Tibial artery (tissue), 4 donors: ENCODE measurements at regions of chr3 and their contacts with region 1.

Region 1: GRCh38 chr3:33787328-33788009 is 11.0 kb upstream of the PDCD6IP start:
- DNase-seq: peak; percentile 62 to 71
- H3K4me3 ChIP-seq: peak overlapping the region; percentile 38 to 44
- H3K27ac ChIP-seq: no peak overlapping the region
- H3K4me1 ChIP-seq: peaks cover 0 to 11% (median 3%) of the 10 kb centered on the region in 4 donors
- H3K27me3 ChIP-seq: no peaks in the 10 kb centered on the region
- CTCF ChIP-seq: peak; percentile 74 to 84

Region 2: GRCh38 chr3:33578325-33579177 is 208.9 kb before region 1 on chr3:
- intact Hi-C with region 1: no loop called
- DNase-seq: no peak
- H3K4me3 ChIP-seq: no peak overlapping the region
- H3K27ac ChIP-seq: no peak overlapping the region
- H3K4me1 ChIP-seq: no peaks in the 10 kb centered on the region
- H3K27me3 ChIP-seq: no peaks in the 10 kb centered on the region
- CTCF ChIP-seq: no peak

Region 3: DNA sequence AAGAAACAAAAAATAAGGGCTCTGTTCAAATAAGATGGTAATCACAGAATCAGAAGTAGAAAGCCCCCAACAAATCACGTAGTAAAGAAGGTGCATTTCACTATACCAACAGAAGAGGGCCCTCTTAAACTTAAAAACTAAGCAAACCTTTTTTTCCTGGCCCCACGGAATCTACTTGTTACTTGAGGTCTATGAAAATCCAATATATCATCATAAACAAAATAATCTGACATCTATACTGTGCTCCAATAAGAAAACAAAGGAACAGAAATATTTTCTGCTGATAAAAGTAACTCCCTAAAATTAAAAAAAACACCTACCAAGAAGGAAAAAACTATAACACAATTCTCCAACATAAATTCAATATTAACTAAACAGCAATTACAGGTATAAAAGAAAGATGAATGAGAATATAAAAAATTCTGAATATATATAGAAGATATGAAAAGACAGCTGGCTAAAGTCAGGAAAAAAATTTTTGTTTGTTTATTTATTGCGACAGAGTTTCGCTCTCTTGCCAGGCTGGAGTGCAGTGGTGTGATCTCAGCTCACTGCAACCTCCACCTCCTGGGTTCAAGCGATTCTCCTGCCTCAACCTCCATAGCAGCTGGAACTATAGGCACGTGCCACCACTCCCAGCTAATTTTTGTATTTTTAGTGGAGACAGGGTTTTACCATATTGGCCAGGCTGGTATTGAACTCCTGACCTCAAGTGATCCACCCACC is 151.2 kb before region 1 on chr3:
- intact Hi-C with region 1: loop called (anchors 5 kb)
- DNase-seq: no peak
- H3K4me3 ChIP-seq: no peak overlapping the region
- H3K27ac ChIP-seq: no peak overlapping the region
- H3K4me1 ChIP-seq: peaks cover 0 to 5% (median 0%) of the 10 kb centered on the region in 4 donors
- H3K27me3 ChIP-seq: no peaks in the 10 kb centered on the region
- CTCF ChIP-seq: peak; percentile 67 to 71

Region 4: DNA sequence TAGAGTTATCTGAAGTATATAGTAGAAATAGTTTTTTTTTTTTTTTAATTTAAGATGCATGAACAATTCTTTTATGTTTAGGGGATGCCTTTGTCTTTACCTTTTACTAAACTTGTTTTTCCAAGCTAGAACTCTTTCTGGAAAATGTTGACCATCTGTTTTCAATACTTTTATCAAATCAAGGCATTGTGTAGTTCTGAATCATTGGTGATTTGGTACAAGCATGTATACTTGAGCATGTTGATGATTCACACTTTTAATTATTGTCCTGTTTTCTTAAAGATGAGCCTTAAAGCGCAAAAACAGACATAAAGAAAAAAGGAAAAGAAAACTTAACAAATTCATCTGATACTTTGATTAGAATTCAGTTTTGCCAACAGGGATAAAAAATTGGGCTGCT is 39.2 kb after region 1 on chr3:
- intact Hi-C with region 1: no loop called
- DNase-seq: no peak
- H3K4me3 ChIP-seq: no peak overlapping the region
- H3K27ac ChIP-seq: no peak overlapping the region
- H3K4me1 ChIP-seq: no peaks in the 10 kb centered on the region
- H3K27me3 ChIP-seq: no peaks in the 10 kb centered on the region
- CTCF ChIP-seq: no peak